ENCODE measurements at regions of chr10 and their contacts with region 1.

Region 1: DNA sequence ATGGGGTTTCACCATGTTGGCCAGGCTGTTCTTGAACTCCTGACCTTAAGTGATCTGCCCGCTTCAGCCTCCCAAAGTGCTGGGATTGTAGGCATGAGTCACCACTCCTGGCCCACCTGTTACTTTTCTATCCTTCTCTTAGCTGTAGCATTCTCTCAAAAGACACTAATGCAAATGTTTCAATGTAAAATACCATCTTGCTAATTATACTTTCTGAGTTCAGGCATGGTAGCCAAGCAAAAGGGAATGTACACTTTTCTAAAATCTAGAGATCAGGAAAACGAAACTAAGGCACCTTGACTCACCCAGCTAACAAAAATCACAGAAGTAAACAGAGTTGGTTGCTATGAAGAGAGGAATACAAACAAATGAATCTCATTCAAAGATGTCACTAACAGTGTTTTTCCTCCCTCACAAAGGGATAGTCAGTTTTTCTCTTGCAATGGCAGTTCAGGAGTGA is 401.0 kb upstream of the NRP1 start:
- DNase-seq: peak; percentile 82
- ATAC-seq: peak; percentile 80
- H3K4me3 ChIP-seq: no peak overlapping the region
- H3K27ac ChIP-seq: peak overlapping the region; percentile 36
- H3K4me1 ChIP-seq: peaks cover 14% of the 10 kb centered on the region
- H3K27me3 ChIP-seq: no peaks in the 10 kb centered on the region
- CTCF ChIP-seq: no peak

Region 2: GRCh38 chr10:33391596-33392465 is 343.7 kb before region 1 on chr10:
- CTCF ChIA-PET with region 1: no interaction called
- POLR2A ChIA-PET with region 1: no interaction called
- intact Hi-C with region 1: no loop called
- DNase-seq: no peak
- ATAC-seq: no peak
- H3K4me3 ChIP-seq: no peak overlapping the region
- H3K27ac ChIP-seq: no peak overlapping the region
- H3K4me1 ChIP-seq: peaks cover 9% of the 10 kb centered on the region
- H3K27me3 ChIP-seq: no peaks in the 10 kb centered on the region
- CTCF ChIP-seq: no peak

Region 3: DNA sequence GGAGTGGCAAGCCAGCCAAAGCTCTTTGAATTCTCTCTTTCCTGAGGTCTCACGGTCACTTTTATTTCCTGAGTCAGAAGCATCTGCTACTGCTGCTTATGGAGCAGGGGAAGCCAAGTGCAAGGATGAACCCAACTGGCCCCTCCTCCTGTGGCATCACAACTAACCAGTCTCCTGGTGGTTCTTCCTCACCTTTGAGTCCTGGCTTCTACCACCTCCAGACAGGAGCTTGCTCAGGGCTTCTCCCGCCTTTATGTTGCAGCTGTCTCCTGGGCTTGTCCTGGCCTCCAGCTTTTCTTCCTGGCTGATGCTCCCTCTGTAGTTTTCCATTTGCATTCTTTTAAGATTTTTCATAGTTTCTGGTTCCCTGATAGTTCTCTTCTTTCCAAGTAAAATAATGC is 51.3 kb before region 1 on chr10:
- CTCF ChIA-PET with region 1: no interaction called
- POLR2A ChIA-PET with region 1: interaction called, 13 read pairs
- intact Hi-C with region 1: no loop called
- DNase-seq: no peak
- ATAC-seq: no peak
- H3K4me3 ChIP-seq: no peak overlapping the region
- H3K27ac ChIP-seq: no peak overlapping the region
- H3K4me1 ChIP-seq: no peaks in the 10 kb centered on the region
- H3K27me3 ChIP-seq: no peaks in the 10 kb centered on the region
- CTCF ChIP-seq: no peak

Measured in PC-3 (cell line).